A673 (cell line): ENCODE measurements at regions of chrX and their contacts with region 1.

Region 1: DNA sequence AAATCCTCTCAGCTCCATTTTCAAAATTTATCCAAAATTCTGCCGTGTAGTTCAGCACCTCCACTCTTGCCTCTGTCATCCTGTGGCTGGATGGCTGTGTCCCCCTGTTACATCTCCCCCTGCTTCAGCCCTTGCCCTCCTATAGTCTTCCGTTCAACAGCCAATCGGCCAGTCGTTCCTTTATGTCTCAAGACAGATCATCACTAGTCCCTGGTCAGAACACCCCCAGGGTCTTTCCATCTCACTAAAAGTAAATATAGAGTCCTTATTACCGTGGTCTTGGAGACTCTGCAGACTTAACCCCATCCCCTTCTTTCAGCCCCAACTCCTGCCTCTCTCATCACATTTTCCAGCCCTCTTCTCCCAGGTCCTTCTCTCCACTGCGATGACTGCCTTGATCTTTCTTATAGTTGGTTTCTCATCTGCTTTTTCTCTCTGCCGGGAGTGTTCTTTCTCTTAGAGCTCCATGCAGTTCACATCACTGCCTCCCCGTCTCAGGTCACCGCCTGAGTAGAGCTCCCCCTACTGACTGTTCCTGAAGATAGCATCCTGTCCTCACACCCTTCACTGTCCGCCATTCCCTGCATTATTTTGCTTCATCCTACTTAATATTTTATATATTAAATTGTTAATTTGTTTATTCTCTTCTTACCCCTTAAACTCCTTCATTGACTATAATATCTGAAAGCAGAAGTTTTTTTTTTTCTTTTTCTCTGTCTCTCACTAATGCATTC is 736.9 kb upstream of the MAGEB2 start:
- DNase-seq: peak; percentile 74
- H3K4me3 ChIP-seq: no peak overlapping the region
- H3K27ac ChIP-seq: no peak overlapping the region
- H3K4me1 ChIP-seq: no peaks in the 10 kb centered on the region
- H3K27me3 ChIP-seq: no peaks in the 10 kb centered on the region
- CTCF ChIP-seq: peak; percentile 81

Region 2: GRCh38 chrX:29090811-29091210 is 387.7 kb before region 1 on chrX:
- CTCF ChIA-PET with region 1: no interaction called
- POLR2A ChIA-PET with region 1: no interaction called
- intact Hi-C with region 1: loop called (anchors 5 kb)
- DNase-seq: peak; percentile 23
- H3K4me3 ChIP-seq: no peak overlapping the region
- H3K27ac ChIP-seq: no peak overlapping the region
- H3K4me1 ChIP-seq: no peaks in the 10 kb centered on the region
- H3K27me3 ChIP-seq: no peaks in the 10 kb centered on the region
- CTCF ChIP-seq: peak; percentile 52

Region 3: GRCh38 chrX:29229802-29230201 is 248.7 kb before region 1 on chrX:
- CTCF ChIA-PET with region 1: no interaction called
- POLR2A ChIA-PET with region 1: no interaction called
- intact Hi-C with region 1: loop called (anchors 10 kb)
- DNase-seq: no peak
- H3K4me3 ChIP-seq: no peak overlapping the region
- H3K27ac ChIP-seq: no peak overlapping the region
- H3K4me1 ChIP-seq: no peaks in the 10 kb centered on the region
- H3K27me3 ChIP-seq: no peaks in the 10 kb centered on the region
- CTCF ChIP-seq: no peak

Region 4: DNA sequence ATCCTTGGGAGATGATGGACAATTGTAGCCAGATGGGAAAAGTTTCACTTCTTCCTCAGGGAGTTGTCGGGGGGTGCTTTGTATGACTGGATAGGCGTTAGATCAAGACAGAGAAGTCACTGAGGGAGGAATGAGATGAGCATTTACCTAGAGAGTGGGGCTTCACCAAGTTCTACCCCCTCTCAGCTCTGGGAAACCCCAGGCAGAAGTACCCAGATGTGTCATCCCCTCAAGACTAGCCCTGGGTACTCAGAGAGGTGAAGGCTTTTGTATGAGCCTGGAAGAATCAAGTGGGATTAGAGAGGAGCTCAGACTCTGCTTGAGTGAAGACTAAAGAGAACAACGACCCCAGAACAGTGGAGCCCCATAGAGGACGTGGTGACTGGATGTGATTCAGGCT is 770.4 kb after region 1 on chrX:
- CTCF ChIA-PET with region 1: no interaction called
- POLR2A ChIA-PET with region 1: no interaction called
- intact Hi-C with region 1: no loop called
- DNase-seq: no peak
- H3K4me3 ChIP-seq: no peak overlapping the region
- H3K27ac ChIP-seq: no peak overlapping the region
- H3K4me1 ChIP-seq: no peaks in the 10 kb centered on the region
- H3K27me3 ChIP-seq: no peaks in the 10 kb centered on the region
- CTCF ChIP-seq: no peak